GM10248 (cell line): ENCODE measurements at regions of chr11 and their contacts with region 1.

Region 1: GRCh38 chr11:108008656-108009496 is at the start of gene CUL5:
- DNase-seq: peak; percentile 92
- CTCF ChIP-seq: peak; percentile 83

Region 2: GRCh38 chr11:108019870-108020540 is 11.1 kb after region 1 on chr11:
- CTCF ChIA-PET with region 1: interaction called, 27 read pairs
- POLR2A ChIA-PET with region 1: interaction called, 3 read pairs
- DNase-seq: no peak
- CTCF ChIP-seq: no peak

Region 3: DNA sequence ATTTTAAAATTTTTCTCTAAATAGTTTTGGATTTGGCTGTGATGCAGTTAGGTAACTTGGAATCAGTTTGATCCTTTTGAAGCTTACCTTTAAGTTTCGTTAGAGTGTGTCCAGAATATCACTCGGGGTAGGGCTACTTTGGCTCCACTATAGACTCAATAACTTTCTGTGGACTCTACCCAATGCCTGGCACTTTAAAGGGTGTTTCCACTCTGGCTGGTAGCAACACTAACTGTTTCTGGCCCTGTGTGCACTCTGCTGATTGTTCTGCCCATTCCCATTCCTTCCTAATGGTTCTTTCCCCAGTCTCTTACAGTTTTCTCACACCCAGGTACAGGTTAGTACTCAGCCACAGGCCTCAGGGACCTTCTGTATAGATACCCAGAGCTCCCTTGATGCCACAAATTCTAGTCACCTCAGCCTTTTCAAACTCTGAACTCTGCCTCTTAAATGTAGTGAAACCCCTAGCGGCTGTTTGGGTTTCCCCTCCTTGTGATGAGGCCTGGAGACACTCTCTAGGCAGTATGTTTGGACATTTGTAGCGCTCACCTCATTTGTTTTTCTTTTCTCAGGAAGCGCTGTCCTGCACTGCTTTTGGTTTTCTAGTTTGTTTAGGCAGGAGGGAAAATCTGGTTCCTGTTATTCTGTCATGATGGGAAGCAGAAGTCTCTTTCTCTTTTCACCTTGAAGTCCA is 16.7 kb after region 1 on chr11:
- CTCF ChIA-PET with region 1: interaction called, 27 read pairs
- POLR2A ChIA-PET with region 1: no interaction called
- DNase-seq: peak; percentile 43
- CTCF ChIP-seq: peak; percentile 24

Region 4: DNA sequence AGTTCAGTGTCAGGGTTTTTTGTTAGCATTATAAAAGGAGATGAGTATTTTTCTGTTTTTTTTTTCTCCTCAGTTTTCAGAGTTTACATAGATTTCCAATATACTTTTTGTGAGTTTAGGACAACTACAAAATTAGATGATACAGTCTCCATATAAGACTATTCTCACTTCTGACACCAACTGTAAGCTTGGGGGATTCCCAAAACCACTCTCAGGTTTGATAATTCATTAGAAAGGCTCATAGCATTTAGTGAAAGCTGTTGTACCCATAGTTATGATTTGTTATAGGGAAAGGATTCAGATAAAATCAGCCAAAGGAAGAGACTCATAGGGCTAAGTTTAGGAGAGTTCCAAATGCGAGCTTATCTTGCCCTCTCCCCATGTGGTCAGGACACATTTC is 23.9 kb after region 1 on chr11:
- CTCF ChIA-PET with region 1: interaction called, 10 read pairs
- POLR2A ChIA-PET with region 1: no interaction called
- DNase-seq: no peak
- CTCF ChIP-seq: no peak

Region 5: GRCh38 chr11:108048269-108048668 is 39.4 kb after region 1 on chr11:
- CTCF ChIA-PET with region 1: interaction called, 10 read pairs
- POLR2A ChIA-PET with region 1: no interaction called
- DNase-seq: no peak
- CTCF ChIP-seq: no peak